Gastrocnemius medialis (tissue), 4 donors: ENCODE measurements at regions of chr3 and their contacts with region 1.

Region 1: GRCh38 chr3:37526511-37526910 is 335.2 kb upstream of the CTDSPL start:
- DNase-seq: peak; percentile 75 to 90
- ATAC-seq: peak; percentile 97
- H3K4me3 ChIP-seq: no peak overlapping the region
- H3K27ac ChIP-seq: peak overlapping the region; percentile 70 to 78 (median 75)
- H3K4me1 ChIP-seq: peaks cover 8 to 20% of the 10 kb centered on the region in 2 donors
- H3K27me3 ChIP-seq: no peaks in the 10 kb centered on the region
- CTCF ChIP-seq: no peak
- POLR2A ChIP-seq: no peak

Region 2: DNA sequence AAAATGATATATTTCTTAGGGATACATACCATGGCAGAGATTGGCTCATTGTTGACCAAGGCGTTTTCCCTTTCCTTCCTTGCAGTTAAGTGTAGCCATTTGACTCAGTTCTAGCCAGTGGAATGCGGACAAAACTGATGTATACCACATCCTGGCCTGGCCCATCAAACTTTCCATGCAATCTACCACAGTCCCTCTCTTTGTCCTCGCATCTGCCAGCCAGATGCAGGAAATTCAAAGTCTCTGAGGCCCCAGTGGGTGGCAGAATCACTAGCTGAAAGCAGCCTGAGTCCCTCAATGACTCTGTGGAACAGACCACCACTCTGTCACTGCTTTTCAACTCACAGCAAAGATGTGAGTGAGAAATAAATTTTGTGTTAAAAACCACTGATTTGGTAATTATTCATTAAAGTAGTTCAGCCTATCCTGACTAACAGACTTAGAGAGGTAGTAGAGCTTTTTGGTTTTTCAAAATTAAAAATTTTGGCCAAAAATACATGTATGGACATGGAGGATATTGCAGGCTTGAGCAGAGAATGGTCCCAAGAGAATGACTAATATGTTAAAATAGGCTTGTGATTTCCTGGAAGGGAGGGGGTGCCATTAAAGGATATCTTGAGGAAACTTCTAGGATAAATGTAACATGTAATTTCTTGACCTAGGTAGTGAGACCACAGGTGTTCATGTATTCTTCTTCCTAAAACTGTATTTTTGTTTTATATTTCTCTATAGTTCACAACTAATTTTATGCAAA is 363.1 kb before region 1 on chr3:
- in situ Hi-C with region 1: no loop called
- intact Hi-C with region 1: no loop called
- DNase-seq: no peak
- ATAC-seq: no peak
- H3K4me3 ChIP-seq: no peak overlapping the region
- H3K27ac ChIP-seq: peak overlapping the region in 1 of 4 donors; percentile 46
- H3K4me1 ChIP-seq: peaks cover 0 to 44% of the 10 kb centered on the region in 2 donors
- H3K27me3 ChIP-seq: no peaks in the 10 kb centered on the region
- CTCF ChIP-seq: no peak
- POLR2A ChIP-seq: no peak

Region 3: GRCh38 chr3:37279236-37279635 is 247.3 kb before region 1 on chr3:
- in situ Hi-C with region 1: no loop called
- intact Hi-C with region 1: no loop called
- DNase-seq: no peak
- ATAC-seq: no peak
- H3K4me3 ChIP-seq: no peak overlapping the region
- H3K27ac ChIP-seq: no peak overlapping the region
- H3K4me1 ChIP-seq: no peaks in the 10 kb centered on the region
- H3K27me3 ChIP-seq: no peaks in the 10 kb centered on the region
- CTCF ChIP-seq: no peak
- POLR2A ChIP-seq: no peak

Region 4: GRCh38 chr3:37456270-37456708 is 70.2 kb before region 1 on chr3:
- in situ Hi-C with region 1: no loop called
- intact Hi-C with region 1: loop called (anchors 1 kb)
- DNase-seq: peak; percentile 85 to 90
- ATAC-seq: peak; percentile 72 to 76
- H3K4me3 ChIP-seq: peak overlapping the region; percentile 2 to 34 (median 14)
- H3K27ac ChIP-seq: peak overlapping the region; percentile 75 to 84 (median 82)
- H3K4me1 ChIP-seq: peaks cover 65 to 66% of the 10 kb centered on the region in 2 donors
- H3K27me3 ChIP-seq: no peaks in the 10 kb centered on the region
- CTCF ChIP-seq: peak in 1 of 5 experiments; percentile 17
- POLR2A ChIP-seq: peak; percentile 59